ENCODE measurements at regions of chr12 and their contacts with region 1.

Region 1: DNA sequence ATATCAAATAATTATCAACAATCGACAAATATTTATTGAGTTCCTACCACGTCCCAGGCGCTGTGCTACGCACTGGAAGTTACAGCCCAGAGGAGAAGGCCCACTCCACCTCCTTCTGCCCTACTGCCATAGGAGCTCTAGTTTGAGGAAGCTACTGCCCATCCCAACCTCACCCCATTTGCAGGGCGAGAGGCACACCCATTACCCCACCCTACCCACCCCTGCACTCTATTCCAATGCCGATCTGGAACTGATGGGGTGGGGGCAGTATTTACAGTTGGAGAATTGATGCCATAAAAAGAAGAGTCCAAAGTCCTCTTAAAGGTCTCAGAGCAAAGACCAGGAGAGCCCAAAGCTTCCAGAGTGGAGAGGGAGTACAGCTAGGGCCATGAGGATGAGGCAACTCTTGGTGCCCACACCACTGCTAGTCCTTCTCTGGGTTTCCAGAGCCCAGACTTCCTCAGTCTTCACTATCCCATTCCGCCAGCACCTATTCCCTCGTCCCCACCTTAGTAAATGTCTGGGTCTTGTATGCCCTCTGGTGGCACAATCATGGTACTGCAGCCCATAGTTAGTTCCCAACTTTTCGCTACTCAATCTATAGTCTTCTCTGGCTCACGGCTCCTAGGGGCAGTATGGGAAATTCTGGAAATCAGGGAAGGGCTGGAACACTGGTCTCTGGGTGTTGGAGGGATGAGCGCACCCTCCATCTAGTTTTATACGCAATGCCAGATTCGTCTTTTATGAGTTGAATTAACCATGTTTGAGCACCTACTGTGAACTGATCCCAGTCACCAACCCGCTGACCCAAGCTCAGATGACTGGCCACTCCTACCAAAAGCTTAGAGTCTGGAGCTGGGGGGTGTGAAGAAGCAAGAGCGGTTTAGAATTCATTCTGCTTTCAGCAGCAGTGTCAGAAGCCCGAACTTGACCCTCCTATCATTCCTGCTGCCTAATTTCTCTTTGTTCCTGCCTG is 6.9 kb upstream of the ADCY6 start:
- DNase-seq: peak; percentile 16
- ATAC-seq: peak; percentile 88
- H3K4me3 ChIP-seq: no peak overlapping the region
- H3K27ac ChIP-seq: no peak overlapping the region
- H3K4me1 ChIP-seq: no peaks in the 10 kb centered on the region
- H3K27me3 ChIP-seq: no peaks in the 10 kb centered on the region; a peak in 1 of 4 replicates
- CTCF ChIP-seq: peak; percentile 93 to 95 (median 95)
- EP300 ChIP-seq: no peak
- POLR2A ChIP-seq: no peak
- RAD21 ChIP-seq: peak; percentile 97

Region 2: DNA sequence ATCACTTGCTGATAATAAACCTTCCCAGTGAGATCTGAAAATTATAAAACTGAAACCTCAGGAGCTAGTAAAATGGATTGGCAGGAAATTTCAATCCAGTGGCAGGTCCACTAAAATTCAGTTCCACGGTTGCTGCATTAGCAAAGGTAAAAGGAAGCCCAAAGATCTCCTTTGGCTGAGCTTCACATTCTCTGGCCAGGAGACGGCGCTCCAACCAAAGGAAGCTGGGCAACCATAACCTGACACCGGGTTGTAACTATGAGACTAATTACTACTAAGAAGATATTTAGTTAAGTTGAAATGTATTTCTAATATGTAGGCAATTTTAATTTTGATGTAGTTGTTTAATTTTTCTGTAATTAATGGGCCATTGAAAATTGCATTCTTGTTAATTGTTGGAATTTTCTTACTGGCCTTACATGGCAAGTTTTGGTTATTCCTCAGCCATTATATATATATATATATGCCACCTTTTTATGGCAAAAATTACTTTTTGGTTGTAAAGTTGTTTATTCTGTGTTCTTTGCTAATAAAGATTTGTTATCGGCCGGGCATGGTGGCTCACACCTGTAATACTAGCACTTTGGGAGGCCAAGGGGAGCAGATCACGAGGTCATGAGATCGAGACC is 253.4 kb before region 1 on chr12:
- CTCF ChIA-PET with region 1: interaction called, 34 read pairs
- POLR2A ChIA-PET with region 1: no interaction called
- RAD21 ChIA-PET with region 1: interaction called, 16 read pairs
- SMC1A ChIA-PET with region 1: interaction called, 4 read pairs
- in situ Hi-C with region 1: loop called (anchors 10 kb)
- intact Hi-C with region 1: loop called (anchors 10 kb)
- DNase-seq: no peak
- ATAC-seq: peak; percentile 75
- H3K4me3 ChIP-seq: no peak overlapping the region
- H3K27ac ChIP-seq: no peak overlapping the region
- H3K4me1 ChIP-seq: 0 out of 2 replicates have a peak, but pooled peaks cover 5% of the 10 kb centered on the region
- H3K27me3 ChIP-seq: no peaks in the 10 kb centered on the region
- CTCF ChIP-seq: peak; percentile 76 to 86 (median 79)
- EP300 ChIP-seq: no peak
- POLR2A ChIP-seq: no peak
- RAD21 ChIP-seq: peak; percentile 98

Region 3: DNA sequence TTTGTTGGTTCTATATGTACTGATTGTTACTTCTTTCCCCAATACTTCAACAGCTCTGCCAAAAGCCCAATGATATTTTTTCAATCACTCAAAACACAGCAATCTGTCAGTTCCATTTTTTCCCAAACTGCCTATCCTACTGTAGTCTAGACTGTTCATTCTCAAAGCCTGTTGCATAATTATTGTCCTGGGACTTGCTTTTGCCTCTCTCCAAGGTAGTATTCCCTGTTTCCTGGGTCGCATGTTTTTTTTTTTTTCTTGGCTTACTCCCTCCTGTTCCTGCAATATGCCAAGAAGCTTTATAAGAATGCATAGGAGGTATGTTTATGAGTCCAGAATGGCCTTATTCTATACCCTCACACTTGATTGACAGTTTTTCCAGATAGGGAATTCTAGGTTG is 59.3 kb before region 1 on chr12:
- CTCF ChIA-PET with region 1: interaction called, 12 read pairs
- POLR2A ChIA-PET with region 1: interaction called, 4 read pairs
- RAD21 ChIA-PET with region 1: interaction called, 4 read pairs
- SMC1A ChIA-PET with region 1: interaction called, 3 read pairs
- in situ Hi-C with region 1: no loop called
- intact Hi-C with region 1: no loop called
- DNase-seq: no peak
- ATAC-seq: no peak
- H3K4me3 ChIP-seq: no peak overlapping the region
- H3K27ac ChIP-seq: no peak overlapping the region
- H3K4me1 ChIP-seq: no peaks in the 10 kb centered on the region
- H3K27me3 ChIP-seq: no peaks in the 10 kb centered on the region
- CTCF ChIP-seq: no peak
- EP300 ChIP-seq: no peak
- POLR2A ChIP-seq: no peak
- RAD21 ChIP-seq: no peak

Region 4: DNA sequence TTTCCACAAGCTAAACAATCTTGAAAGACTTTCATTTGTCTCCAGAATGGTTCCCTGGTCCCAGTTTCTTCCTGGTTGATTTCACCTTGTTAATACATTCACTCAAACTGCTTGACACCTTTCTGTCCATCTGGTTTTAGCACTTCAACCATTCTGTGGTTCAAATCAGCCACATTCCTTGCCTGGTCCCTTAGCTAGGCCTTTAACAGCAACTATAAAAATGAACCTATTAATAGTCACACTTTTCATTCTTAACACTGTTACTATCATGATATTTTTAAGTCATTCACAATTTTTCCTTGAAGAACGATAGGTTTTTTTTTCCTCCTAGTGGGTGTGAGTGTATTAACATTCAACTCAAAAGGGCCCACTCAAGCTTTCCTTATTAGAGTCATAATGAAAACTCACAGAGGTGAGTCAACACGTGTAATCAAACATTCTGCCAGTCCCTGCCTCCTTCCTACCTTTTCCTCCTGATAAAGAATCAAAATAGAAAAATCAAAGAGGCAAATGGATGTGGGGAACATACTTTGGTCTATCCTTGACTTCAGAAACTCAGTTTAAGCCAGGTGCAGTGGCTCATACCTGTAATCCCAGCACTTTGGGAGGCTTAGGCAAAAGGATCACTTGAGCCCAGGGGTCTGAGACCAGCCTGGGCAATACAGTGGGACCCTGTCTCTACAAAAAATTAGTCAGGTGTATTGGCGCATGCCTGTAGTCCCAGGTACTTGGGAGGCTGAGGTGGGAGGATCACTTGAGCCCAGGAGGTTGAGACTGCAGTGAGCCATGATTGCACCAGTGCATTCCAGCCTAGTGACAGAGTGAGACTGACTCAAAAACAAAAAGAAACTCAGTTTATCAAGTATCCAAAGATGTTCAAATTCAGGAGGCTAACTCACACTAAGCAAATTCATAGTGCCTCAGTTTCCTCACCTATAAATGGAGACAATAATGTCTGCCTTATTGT is 44.7 kb before region 1 on chr12:
- CTCF ChIA-PET with region 1: interaction called, 405 read pairs
- POLR2A ChIA-PET with region 1: interaction called, 11 read pairs
- RAD21 ChIA-PET with region 1: interaction called, 158 read pairs
- SMC1A ChIA-PET with region 1: interaction called, 182 read pairs
- in situ Hi-C with region 1: loop called (anchors 5 kb)
- intact Hi-C with region 1: loop called (anchors 1 kb)
- DNase-seq: no peak
- ATAC-seq: no peak
- H3K4me3 ChIP-seq: no peak overlapping the region
- H3K27ac ChIP-seq: no peak overlapping the region
- H3K4me1 ChIP-seq: no peaks in the 10 kb centered on the region
- H3K27me3 ChIP-seq: no peaks in the 10 kb centered on the region; a peak in 1 of 4 replicates
- CTCF ChIP-seq: no peak
- EP300 ChIP-seq: no peak
- POLR2A ChIP-seq: no peak
- RAD21 ChIP-seq: no peak

Region 5: DNA sequence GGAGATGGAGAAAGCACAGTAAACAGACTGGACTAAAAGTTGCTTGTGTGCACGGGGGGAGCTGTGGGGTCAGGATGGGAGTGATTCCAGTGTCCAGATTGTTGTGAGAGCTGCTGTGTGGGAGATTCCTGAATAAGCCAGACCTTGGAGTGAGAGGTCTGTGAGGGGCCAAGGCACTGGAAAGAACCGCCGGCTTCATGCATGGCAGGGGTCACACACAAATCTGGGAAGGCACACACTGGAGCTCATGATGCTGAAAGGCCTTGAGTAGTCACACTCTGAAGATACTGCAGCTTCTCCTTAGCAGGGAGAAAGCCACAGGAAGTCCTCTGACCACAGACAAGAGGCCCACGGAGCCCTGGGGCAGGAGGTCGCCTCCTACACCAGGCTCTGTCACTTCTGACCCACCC is 30.0 kb before region 1 on chr12:
- CTCF ChIA-PET with region 1: interaction called, 405 read pairs
- POLR2A ChIA-PET with region 1: interaction called, 3 read pairs
- RAD21 ChIA-PET with region 1: interaction called, 7 read pairs
- SMC1A ChIA-PET with region 1: interaction called, 7 read pairs
- in situ Hi-C with region 1: no loop called
- intact Hi-C with region 1: no loop called
- DNase-seq: no peak
- ATAC-seq: peak; percentile 86
- H3K4me3 ChIP-seq: no peak overlapping the region
- H3K27ac ChIP-seq: no peak overlapping the region
- H3K4me1 ChIP-seq: peaks cover 18% of the 10 kb centered on the region
- H3K27me3 ChIP-seq: no peaks in the 10 kb centered on the region
- CTCF ChIP-seq: no peak
- EP300 ChIP-seq: no peak
- POLR2A ChIP-seq: no peak
- RAD21 ChIP-seq: no peak

Region 6: DNA sequence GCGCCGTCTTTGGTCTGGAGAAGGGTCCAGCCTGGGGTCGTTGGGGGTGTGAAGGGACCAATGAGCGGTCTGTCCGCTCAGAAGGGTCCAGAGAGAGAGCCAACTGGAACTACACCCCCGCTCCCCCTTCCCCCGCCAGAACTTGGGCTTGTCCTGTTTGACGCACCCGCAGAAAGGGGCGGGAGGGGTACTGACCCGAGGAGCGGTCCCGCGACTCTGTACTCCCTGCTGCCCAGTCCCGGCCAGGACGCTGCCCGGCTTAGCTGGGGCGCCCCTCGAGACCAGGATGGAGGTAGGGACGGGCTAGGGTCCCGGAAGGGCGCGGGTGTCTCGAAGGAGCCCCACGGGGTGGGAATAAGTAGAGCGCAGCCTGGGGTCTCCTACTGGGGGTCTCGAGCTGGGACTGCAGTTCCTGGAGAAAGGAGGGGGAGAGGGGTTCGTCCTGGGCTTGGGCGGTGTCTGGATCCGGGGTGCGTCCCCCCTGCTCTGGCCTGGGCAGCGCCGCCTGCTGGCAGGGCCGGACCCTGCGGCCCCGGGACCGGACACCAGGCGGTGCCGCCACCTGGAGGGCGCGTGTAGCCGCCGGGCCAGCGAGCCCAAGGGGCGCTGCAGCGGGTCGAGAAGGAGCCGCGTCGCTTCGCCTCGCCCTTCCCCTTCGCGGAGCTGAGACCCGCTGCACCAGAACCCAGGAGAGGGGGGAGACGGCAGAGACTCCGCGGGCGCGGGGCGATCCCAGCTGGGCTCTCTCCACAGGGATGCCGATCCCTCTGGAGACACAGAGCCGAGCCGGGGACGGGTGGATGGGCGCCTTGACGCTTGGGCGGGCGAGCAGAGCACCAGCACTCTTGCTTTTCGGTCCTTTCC is 18.7 kb after region 1 on chr12:
- CTCF ChIA-PET with region 1: interaction called, 46 read pairs
- POLR2A ChIA-PET with region 1: interaction called, 5 read pairs
- RAD21 ChIA-PET with region 1: interaction called, 4 read pairs
- SMC1A ChIA-PET with region 1: interaction called, 5 read pairs
- in situ Hi-C with region 1: no loop called
- intact Hi-C with region 1: no loop called
- DNase-seq: peak; percentile 31
- ATAC-seq: peak; percentile 92
- H3K4me3 ChIP-seq: peak overlapping the region; percentile 66
- H3K27ac ChIP-seq: no peak overlapping the region
- H3K4me1 ChIP-seq: peaks cover 7% of the 10 kb centered on the region
- H3K27me3 ChIP-seq: peaks cover 1 to 3% of the 10 kb centered on the region in 2 experiments; a peak in 3 of 4 replicates
- CTCF ChIP-seq: peak; percentile 96 to 100 (median 100); a peak in 5 of 6 replicates
- EP300 ChIP-seq: no peak
- POLR2A ChIP-seq: peak; percentile 75
- RAD21 ChIP-seq: peak; percentile 27